T-cell (primary cell): ENCODE measurements at regions of chr2 and their contacts with region 1.

Region 1: DNA sequence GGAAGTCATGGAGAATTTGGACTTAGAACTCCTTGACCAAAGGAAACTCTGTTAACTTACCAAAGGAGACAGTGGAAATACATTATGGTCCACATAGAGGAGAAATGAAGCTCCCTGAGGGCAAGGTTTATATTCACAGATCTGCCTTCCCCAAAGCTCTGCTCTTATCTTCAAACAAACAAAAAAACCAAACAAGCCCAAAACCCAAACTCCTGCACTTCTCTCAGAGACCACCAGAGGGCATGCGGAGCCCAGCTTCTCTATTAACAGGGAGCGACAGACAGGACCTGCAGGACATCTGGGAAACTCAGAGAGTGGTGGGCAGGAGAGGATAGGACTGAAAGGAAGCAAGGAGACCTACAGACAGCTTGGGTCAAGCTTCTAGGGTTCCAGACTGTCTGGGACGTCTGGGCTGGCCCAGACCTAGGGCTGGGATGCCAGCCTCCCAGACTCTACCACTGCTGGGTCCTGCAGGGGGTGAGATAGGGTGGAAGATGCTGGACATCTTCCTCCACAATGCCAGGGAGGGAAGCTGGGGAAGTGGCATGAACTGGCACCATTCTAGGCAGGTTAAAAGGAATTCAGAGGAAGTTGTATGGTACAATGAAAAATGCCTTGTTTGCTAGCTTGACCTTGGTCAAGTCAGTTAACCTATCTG is 4.0 kb upstream of the WNT10A start:
- DNase-seq: peak; percentile 36 to 87 (median 67)
- ATAC-seq: no peak
- H3K4me3 ChIP-seq: no peak overlapping the region
- H3K4me3 Mint-ChIP-seq: peak overlapping the region in 1 of 3 donors; percentile 34
- H3K27ac ChIP-seq: no peak overlapping the region
- H3K27ac Mint-ChIP-seq: no peak overlapping the region
- H3K4me1 ChIP-seq: peaks cover 0 to 74% of the 10 kb centered on the region in 2 experiments
- H3K4me1 Mint-ChIP-seq: peaks cover 42 to 56% (median 49%) of the 10 kb centered on the region in 3 donors
- H3K27me3 ChIP-seq: peaks cover 14 to 74% of the 10 kb centered on the region in 2 experiments
- H3K27me3 Mint-ChIP-seq: peaks cover 21 to 29% of the 10 kb centered on the region in 2 donors

Region 2: DNA sequence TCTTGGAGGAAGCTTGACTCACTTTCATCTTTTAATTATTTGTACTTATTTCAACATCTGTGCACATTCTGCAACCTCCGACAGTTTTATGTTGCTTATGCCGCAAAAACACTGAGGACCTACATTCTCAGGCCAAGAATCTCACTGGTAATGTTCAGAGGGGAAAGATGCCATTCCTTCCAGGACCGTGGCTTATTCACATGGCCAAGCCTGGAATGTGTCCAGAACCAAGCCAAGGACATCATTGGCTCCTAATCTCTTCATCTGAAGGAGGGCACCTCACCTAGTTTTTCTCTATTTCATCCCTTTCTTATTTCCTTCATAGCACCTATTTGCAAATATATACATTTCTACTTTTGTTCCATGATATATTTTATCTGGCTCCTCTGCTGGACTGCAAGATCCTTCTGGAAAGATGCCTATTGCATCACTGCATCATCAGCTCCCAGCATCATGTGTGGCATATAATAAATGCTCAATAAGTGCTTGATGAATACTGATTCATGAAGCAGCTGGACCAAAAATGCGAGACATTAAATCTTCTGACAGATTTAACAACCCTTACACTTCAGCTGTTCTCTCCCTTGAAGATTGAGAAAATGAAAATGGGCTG is 1251.0 kb before region 1 on chr2:
- CTCF ChIA-PET with region 1: no interaction called
- POLR2A ChIA-PET with region 1: no interaction called
- DNase-seq: no peak
- ATAC-seq: no peak
- H3K4me3 ChIP-seq: no peak overlapping the region
- H3K4me3 Mint-ChIP-seq: no peak overlapping the region
- H3K27ac ChIP-seq: no peak overlapping the region
- H3K27ac Mint-ChIP-seq: no peak overlapping the region
- H3K4me1 ChIP-seq: no peaks in the 10 kb centered on the region
- H3K4me1 Mint-ChIP-seq: no peaks in the 10 kb centered on the region
- H3K27me3 ChIP-seq: no peaks in the 10 kb centered on the region
- H3K27me3 Mint-ChIP-seq: no peaks in the 10 kb centered on the region

Region 3: GRCh38 chr2:218852911-218853667 is 23.6 kb before region 1 on chr2:
- CTCF ChIA-PET with region 1: interaction called, 9 to 10 read pairs
- POLR2A ChIA-PET with region 1: no interaction called
- DNase-seq: peak; percentile 18 to 83 (median 59)
- ATAC-seq: peak; percentile 60 to 90 (median 75)
- H3K4me3 ChIP-seq: no peak overlapping the region
- H3K4me3 Mint-ChIP-seq: no peak overlapping the region
- H3K27ac ChIP-seq: no peak overlapping the region
- H3K27ac Mint-ChIP-seq: no peak overlapping the region
- H3K4me1 ChIP-seq: peaks cover 0 to 6% of the 10 kb centered on the region in 2 experiments
- H3K4me1 Mint-ChIP-seq: peaks cover 0 to 5% (median 0%) of the 10 kb centered on the region in 3 donors
- H3K27me3 ChIP-seq: peaks cover 19 to 85% of the 10 kb centered on the region in 2 experiments
- H3K27me3 Mint-ChIP-seq: peaks cover 60 to 65% of the 10 kb centered on the region in 2 donors

Region 4: DNA sequence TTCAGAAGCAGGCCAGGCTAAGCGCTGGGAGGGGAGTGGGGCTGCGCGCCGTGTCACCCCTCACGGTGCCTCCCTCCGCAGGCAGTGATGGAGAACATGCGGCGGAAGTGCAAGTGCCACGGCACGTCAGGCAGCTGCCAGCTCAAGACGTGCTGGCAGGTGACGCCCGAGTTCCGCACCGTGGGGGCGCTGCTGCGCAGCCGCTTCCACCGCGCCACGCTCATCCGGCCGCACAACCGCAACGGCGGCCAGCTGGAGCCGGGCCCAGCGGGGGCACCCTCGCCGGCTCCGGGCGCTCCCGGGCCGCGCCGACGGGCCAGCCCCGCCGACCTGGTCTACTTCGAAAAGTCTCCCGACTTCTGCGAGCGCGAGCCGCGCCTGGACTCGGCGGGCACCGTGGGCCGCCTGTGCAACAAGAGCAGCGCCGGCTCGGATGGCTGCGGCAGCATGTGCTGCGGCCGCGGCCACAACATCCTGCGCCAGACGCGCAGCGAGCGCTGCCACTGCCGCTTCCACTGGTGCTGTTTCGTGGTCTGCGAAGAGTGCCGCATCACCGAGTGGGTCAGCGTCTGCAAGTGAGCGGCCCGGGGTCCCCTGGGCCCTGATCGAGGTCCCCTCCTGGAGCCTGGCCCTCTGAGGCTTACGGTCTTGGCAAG is 16.1 kb after region 1 on chr2:
- CTCF ChIA-PET with region 1: interaction called, 192 to 239 read pairs
- POLR2A ChIA-PET with region 1: interaction called, 10 to 13 read pairs
- DNase-seq: peak; percentile 76 to 95 (median 85)
- ATAC-seq: peak; percentile 75 to 84 (median 82)
- H3K4me3 ChIP-seq: peak overlapping the region; percentile 11 to 49
- H3K4me3 Mint-ChIP-seq: peak overlapping the region; percentile 71 to 77 (median 76)
- H3K27ac ChIP-seq: peak overlapping the region; percentile 95
- H3K27ac Mint-ChIP-seq: peak overlapping the region; percentile 91 to 93
- H3K4me1 ChIP-seq: peaks cover 37 to 64% of the 10 kb centered on the region in 2 experiments
- H3K4me1 Mint-ChIP-seq: peaks cover 47 to 56% (median 54%) of the 10 kb centered on the region in 3 donors
- H3K27me3 ChIP-seq: peaks cover 0 to 6% of the 10 kb centered on the region in 2 experiments
- H3K27me3 Mint-ChIP-seq: no peaks in the 10 kb centered on the region

Region 5: GRCh38 chr2:218898109-218898878 is 21.6 kb after region 1 on chr2:
- CTCF ChIA-PET with region 1: interaction called, 192 to 239 read pairs
- POLR2A ChIA-PET with region 1: interaction called, 10 to 13 read pairs
- DNase-seq: peak in 34 of 35 experiments; percentile 40 to 85 (median 65)
- ATAC-seq: peak; percentile 25 to 47 (median 44)
- H3K4me3 ChIP-seq: peak overlapping the region in 1 of 2 donors; percentile 57
- H3K4me3 Mint-ChIP-seq: peak overlapping the region; percentile 68 to 86 (median 69)
- H3K27ac ChIP-seq: peak overlapping the region; percentile 98
- H3K27ac Mint-ChIP-seq: peak overlapping the region; percentile 50
- H3K4me1 ChIP-seq: peaks cover 40 to 54% of the 10 kb centered on the region in 2 experiments
- H3K4me1 Mint-ChIP-seq: peaks cover 43 to 46% (median 44%) of the 10 kb centered on the region in 3 donors
- H3K27me3 ChIP-seq: peaks cover 21 to 31% of the 10 kb centered on the region in 2 experiments
- H3K27me3 Mint-ChIP-seq: peaks cover 19 to 21% of the 10 kb centered on the region in 2 donors

Region 6: GRCh38 chr2:218908721-218909619 is 32.3 kb after region 1 on chr2:
- CTCF ChIA-PET with region 1: interaction called, 3 to 10 read pairs
- POLR2A ChIA-PET with region 1: no interaction called
- DNase-seq: peak; percentile 74 to 94 (median 86)
- ATAC-seq: peak; percentile 99
- H3K4me3 ChIP-seq: peak overlapping the region; percentile 57 to 67
- H3K4me3 Mint-ChIP-seq: peak overlapping the region; percentile 77 to 83 (median 81)
- H3K27ac ChIP-seq: peak overlapping the region; percentile 48
- H3K27ac Mint-ChIP-seq: peak overlapping the region; percentile 63 to 80
- H3K4me1 ChIP-seq: peaks cover 3 to 13% of the 10 kb centered on the region in 2 experiments
- H3K4me1 Mint-ChIP-seq: peaks cover 10 to 14% (median 11%) of the 10 kb centered on the region in 3 donors
- H3K27me3 ChIP-seq: peaks cover 5 to 32% of the 10 kb centered on the region in 2 experiments
- H3K27me3 Mint-ChIP-seq: peaks cover 15 to 16% of the 10 kb centered on the region in 2 donors

Region 7: GRCh38 chr2:218979846-218980734 is 103.4 kb after region 1 on chr2:
- CTCF ChIA-PET with region 1: interaction called in 1 of 2 experiments, 12 read pairs
- POLR2A ChIA-PET with region 1: no interaction called
- DNase-seq: peak; percentile 59 to 90 (median 79)
- ATAC-seq: peak; percentile 84 to 90 (median 88)
- H3K4me3 ChIP-seq: peak overlapping the region; percentile 11 to 57
- H3K4me3 Mint-ChIP-seq: peak overlapping the region; percentile 57 to 83 (median 74)
- H3K27ac ChIP-seq: no peak overlapping the region
- H3K27ac Mint-ChIP-seq: no peak overlapping the region
- H3K4me1 ChIP-seq: peaks cover 10 to 47% of the 10 kb centered on the region in 2 experiments
- H3K4me1 Mint-ChIP-seq: peaks cover 30 to 34% (median 31%) of the 10 kb centered on the region in 3 donors
- H3K27me3 ChIP-seq: peaks cover 15 to 70% of the 10 kb centered on the region in 2 experiments
- H3K27me3 Mint-ChIP-seq: peaks cover 68 to 80% of the 10 kb centered on the region in 2 donors